ENCODE measurements at regions of chr2 and their contacts with region 1.

Region 1: DNA sequence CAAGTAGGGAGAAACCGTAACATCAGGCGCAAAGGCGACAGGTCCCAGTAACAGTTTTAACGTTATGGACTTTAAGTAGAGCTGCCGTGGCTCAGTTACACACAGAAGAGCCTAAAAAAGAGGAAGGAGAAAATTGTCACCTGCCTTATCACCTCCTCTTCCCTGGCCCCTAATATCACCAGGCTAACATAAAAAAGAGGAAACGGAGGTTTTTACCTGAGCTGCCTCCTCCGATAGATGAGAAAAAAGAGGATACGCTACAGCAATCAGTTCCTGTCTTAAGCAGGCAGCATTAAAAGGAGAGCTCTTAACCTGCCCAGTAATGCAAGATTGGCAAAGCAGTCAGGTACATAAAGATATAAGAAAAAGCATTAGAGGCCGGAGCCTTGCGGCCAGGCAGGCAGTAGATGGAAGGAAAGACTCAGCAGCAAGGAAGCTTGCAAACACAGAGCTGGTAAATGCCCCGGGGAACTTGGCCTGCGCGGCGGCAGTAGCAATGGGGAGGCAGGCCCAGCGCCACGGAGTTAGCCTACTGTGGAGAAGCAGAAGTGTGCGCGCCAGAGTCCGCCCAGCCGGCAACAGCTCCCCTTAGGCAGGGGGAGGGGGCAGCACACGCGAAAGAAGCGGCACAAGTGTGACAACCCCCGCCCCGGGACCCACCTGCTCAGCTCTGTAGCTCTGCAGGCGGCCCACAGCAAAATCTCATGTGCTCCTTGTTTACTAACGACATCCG is 116.3 kb upstream of the SCN7A start:
- DNase-seq: peak in 1 of 2 experiments; percentile 65
- H3K4me3 ChIP-seq: peak overlapping the region in 1 of 4 experiments; percentile 14; a peak in 1 of 8 replicates
- H3K27ac ChIP-seq: no peak overlapping the region
- H3K4me1 ChIP-seq: peaks cover 0 to 10% (median 3%) of the 10 kb centered on the region in 4 experiments; a peak in 6 of 7 replicates
- H3K27me3 ChIP-seq: peaks cover 0 to 2% (median 0%) of the 10 kb centered on the region in 4 experiments; a peak in 1 of 7 replicates
- CTCF ChIP-seq: no peak
- EP300 ChIP-seq: no peak
- POLR2A ChIP-seq: no peak
- RAD21 ChIP-seq: peak in 1 of 2 experiments; percentile 4; a peak in 1 of 4 replicates

Region 2: GRCh38 chr2:166375736-166376487 is 234.4 kb before region 1 on chr2 and contains the start of gene SCN9A:
- CTCF ChIA-PET with region 1: no interaction called
- POLR2A ChIA-PET with region 1: no interaction called
- DNase-seq: peak; percentile 67 to 85
- H3K4me3 ChIP-seq: peak within 1 kb of the TSS; percentile 75 to 87 (median 80)
- H3K27ac ChIP-seq: no peak within 1 kb of the TSS
- H3K4me1 ChIP-seq: peaks cover 0 to 13% (median 9%) of the 10 kb centered on the region in 4 experiments; a peak in 5 of 7 replicates
- H3K27me3 ChIP-seq: no peaks in the 10 kb centered on the region; a peak in 1 of 7 replicates
- CTCF ChIP-seq: no peak
- EP300 ChIP-seq: no peak
- POLR2A ChIP-seq: peak in 1 of 2 experiments; percentile 36; a peak in 1 of 3 replicates
- RAD21 ChIP-seq: peak in 1 of 2 experiments; percentile 24; a peak in 2 of 4 replicates
- total RNA-seq, gene SCN9A: 6.1 and 6.2 TPM in 2 replicates

Region 3: GRCh38 chr2:166454006-166454595 is 156.2 kb before region 1 on chr2:
- CTCF ChIA-PET with region 1: no interaction called
- POLR2A ChIA-PET with region 1: no interaction called
- DNase-seq: no peak
- H3K4me3 ChIP-seq: no peak overlapping the region
- H3K27ac ChIP-seq: no peak overlapping the region
- H3K4me1 ChIP-seq: no peaks in the 10 kb centered on the region
- H3K27me3 ChIP-seq: no peaks in the 10 kb centered on the region
- CTCF ChIP-seq: no peak
- EP300 ChIP-seq: no peak
- POLR2A ChIP-seq: no peak
- RAD21 ChIP-seq: no peak

Region 4: GRCh38 chr2:166539340-166540162 is 70.8 kb before region 1 on chr2:
- CTCF ChIA-PET with region 1: interaction called, 28 read pairs
- POLR2A ChIA-PET with region 1: no interaction called
- DNase-seq: no peak
- H3K4me3 ChIP-seq: no peak overlapping the region
- H3K27ac ChIP-seq: no peak overlapping the region
- H3K4me1 ChIP-seq: no peaks in the 10 kb centered on the region
- H3K27me3 ChIP-seq: no peaks in the 10 kb centered on the region
- CTCF ChIP-seq: peak in 2 of 3 experiments; percentile 60 to 78; a peak in 3 of 4 replicates
- EP300 ChIP-seq: no peak
- POLR2A ChIP-seq: no peak
- RAD21 ChIP-seq: peak; percentile 92 to 94

Region 5: DNA sequence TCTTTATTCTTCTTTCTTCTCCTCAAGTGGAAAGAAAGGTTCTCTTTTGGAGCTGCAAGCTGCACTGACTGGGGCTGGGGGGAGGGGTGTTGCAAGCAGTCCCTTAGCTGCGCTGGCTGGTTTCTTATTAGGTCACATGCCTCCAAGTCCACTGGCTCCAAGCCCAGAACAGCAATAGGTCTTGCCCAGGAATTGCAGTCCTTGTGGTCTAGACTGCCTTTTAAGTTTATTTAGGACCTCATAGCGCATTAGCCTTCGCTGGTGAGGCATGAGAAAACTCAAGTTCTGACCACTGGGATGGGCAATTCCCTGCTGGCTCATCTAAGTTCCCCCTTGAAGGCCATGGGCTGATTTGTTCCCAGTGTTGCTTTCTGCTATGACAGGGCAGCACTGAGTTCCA is 22.3 kb after region 1 on chr2:
- CTCF ChIA-PET with region 1: interaction called, 47 read pairs
- POLR2A ChIA-PET with region 1: interaction called, 4 read pairs
- DNase-seq: no peak
- H3K4me3 ChIP-seq: no peak overlapping the region
- H3K27ac ChIP-seq: no peak overlapping the region
- H3K4me1 ChIP-seq: peaks cover 0 to 6% (median 1%) of the 10 kb centered on the region in 4 experiments; a peak in 1 of 7 replicates
- H3K27me3 ChIP-seq: no peaks in the 10 kb centered on the region
- CTCF ChIP-seq: no peak
- EP300 ChIP-seq: no peak
- POLR2A ChIP-seq: no peak
- RAD21 ChIP-seq: no peak

Measured in H1 (cell line).